ENCODE measurements at regions of chr10 and their contacts with region 1.

Region 1: GRCh38 chr10:130889780-130890179 is 421.7 kb downstream of the TCERG1L start:
- DNase-seq: no peak

Region 2: DNA sequence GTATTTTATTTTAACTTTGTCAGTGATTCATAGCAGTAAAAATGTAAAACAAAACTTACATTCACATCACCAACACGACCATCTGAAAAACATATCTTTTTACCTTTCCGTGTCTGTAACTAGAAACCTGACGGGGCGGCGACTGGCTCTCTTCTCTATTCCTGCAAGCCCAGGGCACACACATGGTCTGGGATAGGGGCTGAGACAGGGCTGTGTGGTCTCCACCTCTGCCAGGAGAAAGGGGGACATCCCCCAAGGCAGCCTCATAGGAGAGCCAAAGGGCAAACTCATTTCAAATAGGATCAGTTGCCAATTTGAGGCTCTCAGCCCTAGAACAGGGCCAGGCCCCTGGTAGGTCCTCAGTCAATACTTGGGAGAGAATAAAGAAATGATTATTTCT is 62.3 kb after region 1 on chr10:
- intact Hi-C with region 1: no loop called
- DNase-seq: no peak

Region 3: GRCh38 chr10:131736321-131736980 is 846.7 kb after region 1 on chr10:
- intact Hi-C with region 1: loop called in 1 of 2 experiments (anchors 2 kb)
- DNase-seq: peak; percentile 69

Measured in posterior vena cava (tissue), 2 donors.